Psoas muscle (tissue), 8 donors: ENCODE measurements at regions of chr14 and their contacts with region 1.

Region 1: DNA sequence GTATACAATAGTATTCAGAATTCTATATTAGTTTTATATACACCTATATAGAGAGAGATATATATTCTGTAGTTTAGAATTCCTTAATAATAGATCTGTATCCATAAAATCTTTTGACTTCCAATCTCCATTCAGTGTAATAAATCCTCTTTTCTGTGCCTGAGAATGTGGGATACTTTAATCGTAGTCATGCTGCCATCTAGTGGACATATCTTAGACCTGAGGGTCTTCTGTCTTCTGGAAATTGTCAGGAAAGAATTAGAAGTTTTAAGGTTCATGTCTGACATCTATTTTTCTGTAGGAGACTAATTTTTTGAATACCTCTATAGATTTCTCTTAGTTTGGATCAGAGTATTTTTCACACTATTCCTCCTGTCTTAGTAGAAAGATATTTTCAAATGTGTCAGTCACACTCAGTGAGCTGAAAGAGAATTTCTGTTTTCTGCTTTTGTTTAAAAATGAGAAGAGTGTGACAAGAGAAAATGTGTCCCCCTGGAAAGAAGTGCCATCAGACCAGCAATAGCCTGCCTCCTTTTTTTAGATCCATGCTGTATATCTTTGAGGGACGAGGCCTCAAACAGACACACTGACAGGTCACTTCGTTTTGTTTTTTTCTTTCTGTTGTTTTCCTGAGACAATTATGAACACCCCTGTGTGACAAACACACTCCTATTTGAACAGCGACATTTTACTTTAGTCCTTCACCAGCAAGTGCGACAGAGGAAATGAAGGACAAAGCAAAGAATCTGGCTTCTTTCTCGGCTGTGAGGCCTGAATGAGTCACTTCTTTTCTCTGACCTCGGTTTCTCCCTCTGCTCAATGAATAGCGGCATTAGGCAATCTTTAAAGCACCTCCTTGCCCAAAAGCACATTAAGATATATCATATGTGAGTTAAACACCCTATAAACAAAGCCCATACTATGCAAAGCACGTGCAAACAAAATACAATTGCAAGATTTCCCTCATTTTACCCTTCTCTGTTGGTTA is 96.3 kb downstream of the GALC start:
- DNase-seq: no peak
- ATAC-seq: no peak
- H3K4me3 ChIP-seq: no peak overlapping the region
- H3K27ac ChIP-seq: no peak overlapping the region
- H3K4me1 ChIP-seq: no peaks in the 10 kb centered on the region
- H3K27me3 ChIP-seq: no peaks in the 10 kb centered on the region
- CTCF ChIP-seq: peak; percentile 78

Region 2: DNA sequence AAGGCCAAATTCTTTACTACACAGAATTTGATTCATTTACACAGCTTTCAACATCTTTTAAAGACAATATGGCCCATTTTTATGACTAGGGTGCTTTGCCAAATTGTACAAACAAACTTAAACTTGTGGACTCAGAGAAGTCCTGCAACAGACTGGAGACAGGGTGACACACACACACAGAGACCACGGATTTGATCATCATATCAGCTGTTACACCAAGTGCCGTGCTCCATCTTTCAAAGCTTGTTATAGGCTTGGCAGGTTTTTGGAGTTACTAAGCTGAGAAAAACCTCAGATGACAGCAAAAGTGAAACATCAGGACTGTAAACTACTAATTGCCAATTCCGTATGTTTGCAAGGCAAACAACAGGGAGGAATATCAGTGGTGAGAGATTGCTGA is 715.4 kb before region 1 on chr14:
- intact Hi-C with region 1: no loop called
- DNase-seq: no peak
- ATAC-seq: no peak
- H3K4me3 ChIP-seq: no peak overlapping the region
- H3K27ac ChIP-seq: no peak overlapping the region
- H3K4me1 ChIP-seq: no peaks in the 10 kb centered on the region
- H3K27me3 ChIP-seq: no peaks in the 10 kb centered on the region
- CTCF ChIP-seq: no peak

Region 3: DNA sequence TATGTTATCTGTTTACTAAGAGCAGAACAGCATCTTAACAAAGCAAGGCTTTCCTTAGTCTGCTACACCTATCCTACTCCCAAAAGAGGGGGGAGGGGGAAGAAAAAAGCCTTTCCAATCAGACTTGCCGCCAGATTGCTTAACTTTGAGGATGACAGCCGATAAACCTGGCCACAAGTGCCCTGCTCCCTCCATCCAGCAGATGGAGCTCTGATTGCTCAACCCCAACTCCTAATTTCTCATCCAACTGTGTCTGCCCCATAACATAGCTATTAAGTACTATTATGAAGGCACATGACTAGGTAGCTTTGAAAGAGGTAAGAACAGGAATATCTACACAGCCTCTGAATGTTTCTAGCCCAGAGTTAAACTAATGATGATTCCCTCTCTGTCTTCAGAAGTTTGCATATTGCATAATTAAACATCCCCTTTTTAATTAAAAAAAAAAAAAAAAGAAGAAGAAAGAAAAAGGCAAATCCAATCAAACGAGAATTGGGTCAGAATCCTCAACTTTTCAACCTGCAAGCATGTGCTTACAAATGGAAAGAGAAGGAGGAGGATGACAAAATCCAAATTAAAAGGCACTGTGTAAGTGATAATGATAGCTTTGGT is 151.1 kb before region 1 on chr14:
- intact Hi-C with region 1: loop called (anchors 5 to 10 kb)
- DNase-seq: no peak
- ATAC-seq: no peak
- H3K4me3 ChIP-seq: no peak overlapping the region
- H3K27ac ChIP-seq: no peak overlapping the region
- H3K4me1 ChIP-seq: no peaks in the 10 kb centered on the region
- H3K27me3 ChIP-seq: no peaks in the 10 kb centered on the region
- CTCF ChIP-seq: peak; percentile 39

Region 4: DNA sequence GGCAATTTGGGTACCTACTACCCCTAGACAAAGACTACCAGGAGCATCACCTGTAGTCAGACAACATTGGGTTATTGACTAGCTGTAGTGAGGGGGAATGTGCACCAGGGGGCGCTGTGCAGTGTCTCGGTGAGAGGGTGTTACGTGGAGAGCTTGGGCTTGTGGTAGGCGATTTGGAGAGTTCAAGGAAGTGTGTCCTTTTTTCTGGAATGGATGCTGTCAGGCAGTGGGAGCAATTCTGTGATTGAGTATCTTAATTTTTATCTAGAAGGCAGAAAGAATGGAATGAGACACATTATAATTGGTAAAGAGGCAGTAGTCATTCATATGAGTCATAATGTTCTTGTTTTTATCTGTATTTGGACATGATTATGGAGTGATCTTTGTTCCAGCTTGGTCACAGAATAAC is 91.4 kb before region 1 on chr14:
- intact Hi-C with region 1: loop called (anchors 5 kb)
- DNase-seq: peak; percentile 33 to 51
- ATAC-seq: no peak
- H3K4me3 ChIP-seq: no peak overlapping the region
- H3K27ac ChIP-seq: no peak overlapping the region
- H3K4me1 ChIP-seq: no peaks in the 10 kb centered on the region
- H3K27me3 ChIP-seq: no peaks in the 10 kb centered on the region
- CTCF ChIP-seq: peak; percentile 50

Region 5: GRCh38 chr14:87979689-87980088 is 83.0 kb after region 1 on chr14:
- intact Hi-C with region 1: no loop called
- DNase-seq: no peak
- ATAC-seq: no peak
- H3K4me3 ChIP-seq: no peak overlapping the region
- H3K27ac ChIP-seq: no peak overlapping the region
- H3K4me1 ChIP-seq: no peaks in the 10 kb centered on the region
- H3K27me3 ChIP-seq: no peaks in the 10 kb centered on the region
- CTCF ChIP-seq: no peak

Region 6: GRCh38 chr14:88181072-88181471 is 284.4 kb after region 1 on chr14:
- intact Hi-C with region 1: no loop called
- DNase-seq: no peak
- ATAC-seq: no peak
- H3K4me3 ChIP-seq: no peak overlapping the region
- H3K27ac ChIP-seq: no peak overlapping the region
- H3K4me1 ChIP-seq: no peaks in the 10 kb centered on the region
- H3K27me3 ChIP-seq: no peaks in the 10 kb centered on the region
- CTCF ChIP-seq: no peak